ENCODE measurements at regions of chr14 and their contacts with region 1.

Region 1: DNA sequence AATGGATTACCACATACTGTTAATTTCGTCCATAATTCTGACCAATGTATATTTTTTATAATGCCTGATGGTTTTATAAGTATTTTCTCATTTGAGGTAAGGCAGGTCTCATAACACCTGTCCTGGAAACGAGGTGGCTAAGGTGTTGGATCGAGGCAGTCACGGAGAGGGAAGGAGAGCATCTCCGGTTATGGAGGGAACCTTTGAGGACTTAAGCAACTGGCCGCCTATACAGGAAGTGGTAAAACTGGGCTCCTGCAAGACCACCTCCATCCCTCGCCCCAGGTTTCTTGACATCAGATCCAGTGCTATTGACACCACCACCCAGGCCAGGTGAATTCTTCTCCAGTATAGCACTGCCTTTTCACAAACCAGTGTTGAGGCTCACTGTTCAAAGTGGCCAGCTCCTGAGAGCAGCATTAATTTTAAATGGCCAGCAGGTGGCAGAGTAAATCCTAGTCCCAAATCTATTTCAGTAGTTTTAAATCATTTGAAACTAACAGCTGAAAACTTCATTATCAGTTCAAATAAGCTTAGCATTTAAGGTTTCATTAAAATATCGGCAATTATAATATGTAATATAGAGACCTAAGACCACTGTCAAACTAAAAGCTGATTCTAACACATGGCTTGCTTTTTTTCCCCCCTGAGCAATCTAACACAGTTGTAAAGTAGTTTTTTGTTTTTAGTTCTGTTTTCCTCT is 100.8 kb downstream of the PPM1A start:
- DNase-seq: peak; percentile 16
- H3K4me3 ChIP-seq: no peak overlapping the region
- H3K27ac ChIP-seq: no peak overlapping the region
- H3K4me1 ChIP-seq: no peaks in the 10 kb centered on the region
- H3K27me3 ChIP-seq: no peaks in the 10 kb centered on the region
- CTCF ChIP-seq: peak; percentile 45 to 71 (median 60)
- EP300 ChIP-seq: no peak
- POLR2A ChIP-seq: no peak

Region 2: DNA sequence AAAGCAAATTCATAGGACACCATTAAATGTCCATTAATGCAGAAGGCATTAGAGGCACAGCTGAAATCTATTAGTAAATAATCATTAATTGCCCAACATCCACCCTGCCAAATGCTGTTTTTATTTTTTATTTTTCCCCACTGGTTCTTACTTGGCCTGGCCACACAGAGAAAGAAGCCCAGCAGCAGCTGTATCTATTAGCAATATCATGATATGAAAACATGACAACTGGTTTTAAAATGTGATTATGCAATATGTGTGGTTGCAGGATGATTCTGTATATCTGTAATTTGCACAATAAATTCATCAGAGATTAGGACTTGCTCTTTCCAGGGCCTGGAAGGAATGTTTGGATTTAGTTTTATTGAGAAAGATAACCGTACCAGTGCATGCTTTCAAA is 204.0 kb after region 1 on chr14:
- in situ Hi-C with region 1: loop called in 2 of 4 experiments (anchors 10 to 25 kb)
- intact Hi-C with region 1: no loop called
- DNase-seq: no peak
- H3K4me3 ChIP-seq: no peak overlapping the region
- H3K27ac ChIP-seq: no peak overlapping the region
- H3K4me1 ChIP-seq: no peaks in the 10 kb centered on the region
- H3K27me3 ChIP-seq: no peaks in the 10 kb centered on the region
- CTCF ChIP-seq: no peak
- EP300 ChIP-seq: no peak
- POLR2A ChIP-seq: no peak

Region 3: GRCh38 chr14:60561845-60562746 is 212.3 kb after region 1 on chr14:
- in situ Hi-C with region 1: loop called in 2 of 4 experiments (anchors 10 to 25 kb)
- intact Hi-C with region 1: loop called (anchors 10 kb)
- DNase-seq: peak; percentile 11
- H3K4me3 ChIP-seq: no peak overlapping the region
- H3K27ac ChIP-seq: no peak overlapping the region
- H3K4me1 ChIP-seq: no peaks in the 10 kb centered on the region
- H3K27me3 ChIP-seq: no peaks in the 10 kb centered on the region
- CTCF ChIP-seq: peak; percentile 16 to 37 (median 30)
- EP300 ChIP-seq: no peak
- POLR2A ChIP-seq: no peak

Measured in transverse colon (tissue), 4 donors.